HCT116 (cell line): ENCODE measurements at regions of chr6 and their contacts with region 1.

Region 1: DNA sequence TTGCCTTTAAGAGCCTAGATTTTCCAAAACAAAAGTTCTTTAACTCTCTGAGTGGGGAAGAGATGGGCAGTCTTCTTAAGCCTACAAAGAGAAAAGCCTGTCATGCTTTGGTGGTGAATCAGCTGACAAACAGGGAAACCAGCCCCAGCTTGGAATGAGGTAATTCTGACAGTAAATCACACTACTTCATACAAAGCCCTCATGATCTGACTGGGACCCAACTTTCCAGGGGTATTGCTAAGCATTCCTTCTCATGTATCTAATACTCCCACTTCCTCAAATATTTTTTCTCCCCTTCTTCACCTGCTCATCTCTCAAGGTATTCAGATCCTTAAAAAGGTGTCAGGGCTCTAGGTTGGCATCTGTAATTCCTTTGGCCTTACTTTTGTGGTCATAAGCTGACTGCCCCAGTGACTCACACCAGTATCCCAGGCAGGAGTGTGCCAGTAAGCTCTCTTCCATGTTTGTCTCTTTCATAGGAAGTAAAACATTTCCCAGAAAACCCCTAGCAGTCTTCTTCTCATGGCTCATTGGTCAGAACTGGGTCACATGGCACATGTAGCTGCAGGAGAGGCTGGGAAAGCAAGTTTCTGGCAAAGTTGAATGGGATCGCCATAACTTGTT is 15.0 kb upstream of the TBC1D22B start:
- DNase-seq: peak; percentile 82
- ATAC-seq: peak; percentile 81
- H3K4me3 ChIP-seq: peak overlapping the region; percentile 24 to 27
- H3K27ac ChIP-seq: peak overlapping the region; percentile 74
- H3K4me1 ChIP-seq: peaks cover 44 to 68% of the 10 kb centered on the region in 2 experiments
- H3K27me3 ChIP-seq: no peaks in the 10 kb centered on the region
- CTCF ChIP-seq: no peak
- POLR2A ChIP-seq: no peak
- RAD21 ChIP-seq: no peak

Region 2: DNA sequence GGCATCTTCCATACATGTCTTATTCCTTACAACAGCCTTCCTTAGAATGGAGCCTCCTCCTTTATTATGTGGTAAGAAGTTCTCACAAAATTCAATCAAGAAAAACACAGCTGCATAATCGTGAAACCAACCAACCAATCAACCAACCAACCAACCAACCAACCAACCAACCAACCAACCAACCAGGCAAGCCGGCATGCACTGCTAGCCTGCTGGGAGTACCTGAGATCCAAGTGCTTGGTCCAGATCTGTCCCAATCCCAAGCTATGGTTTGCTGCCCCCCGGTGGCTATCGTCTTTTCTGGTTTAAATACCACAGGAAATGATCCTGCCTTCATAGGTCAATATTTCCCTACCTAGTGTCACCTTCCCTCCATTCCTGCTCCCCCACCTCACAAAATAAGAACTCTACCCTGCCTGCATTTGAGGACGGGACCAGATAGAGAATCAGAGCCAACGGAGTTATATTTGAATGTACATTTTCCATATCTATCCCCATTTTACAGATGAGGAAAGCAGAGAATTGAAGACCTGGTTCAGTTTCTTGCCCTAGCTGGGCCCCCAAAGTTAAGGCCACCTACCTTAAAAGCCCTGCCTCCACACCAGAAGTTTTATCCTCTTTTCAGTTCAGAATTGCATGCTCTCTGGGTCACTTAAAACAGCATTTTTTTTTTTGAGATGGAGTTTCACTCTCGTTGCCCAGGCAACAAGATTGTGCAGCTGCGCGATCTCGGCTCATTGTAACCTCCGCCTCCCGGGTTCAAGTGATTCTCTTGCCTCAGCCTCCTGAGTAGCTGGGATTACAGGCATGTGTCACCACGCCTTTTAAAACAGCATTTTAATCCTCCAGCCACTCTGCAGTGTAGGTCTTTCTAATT is 517.8 kb before region 1 on chr6:
- CTCF ChIA-PET with region 1: no interaction called
- POLR2A ChIA-PET with region 1: no interaction called
- RAD21 ChIA-PET with region 1: no interaction called
- intact Hi-C with region 1: no loop called
- DNase-seq: peak; percentile 78
- ATAC-seq: peak; percentile 94
- H3K4me3 ChIP-seq: no peak overlapping the region
- H3K27ac ChIP-seq: no peak overlapping the region
- H3K4me1 ChIP-seq: no peaks in the 10 kb centered on the region; a peak in 1 of 4 replicates
- H3K27me3 ChIP-seq: no peaks in the 10 kb centered on the region
- CTCF ChIP-seq: peak; percentile 70 to 89 (median 74)
- POLR2A ChIP-seq: no peak
- RAD21 ChIP-seq: peak; percentile 96

Region 3: GRCh38 chr6:36858407-36858981 is 384.0 kb before region 1 on chr6:
- CTCF ChIA-PET with region 1: no interaction called
- POLR2A ChIA-PET with region 1: no interaction called
- RAD21 ChIA-PET with region 1: no interaction called
- intact Hi-C with region 1: no loop called
- DNase-seq: no peak
- ATAC-seq: no peak
- H3K4me3 ChIP-seq: no peak overlapping the region
- H3K27ac ChIP-seq: peak overlapping the region; percentile 11; the same call in 1 of the 2 replicates
- H3K4me1 ChIP-seq: peaks cover 0 to 3% of the 10 kb centered on the region in 2 experiments; a peak in 1 of 4 replicates
- H3K27me3 ChIP-seq: no peaks in the 10 kb centered on the region
- CTCF ChIP-seq: no peak
- POLR2A ChIP-seq: no peak
- RAD21 ChIP-seq: no peak

Region 4: GRCh38 chr6:37257634-37258404 is 15.3 kb after region 1 on chr6 and contains the starts of genes TBC1D22B and TMEM217:
- CTCF ChIA-PET with region 1: no interaction called
- POLR2A ChIA-PET with region 1: interaction called, 10 read pairs
- RAD21 ChIA-PET with region 1: no interaction called
- intact Hi-C with region 1: no loop called
- DNase-seq: peak; percentile 91
- ATAC-seq: peak; percentile 100
- H3K4me3 ChIP-seq: peak within 1 kb of the TSS; percentile 73 to 96
- H3K27ac ChIP-seq: peak within 1 kb of the TSS; percentile 70
- H3K4me1 ChIP-seq: peaks cover 8 to 14% of the 10 kb centered on the region in 2 experiments; a peak in 3 of 4 replicates
- H3K27me3 ChIP-seq: no peaks in the 10 kb centered on the region
- CTCF ChIP-seq: no peak
- POLR2A ChIP-seq: peak; percentile 51
- RAD21 ChIP-seq: no peak
- total RNA-seq, gene TBC1D22B: 9.1 TPM
- total RNA-seq, gene TMEM217: 0.98 TPM